ENCODE measurements at regions of chr6 and their contacts with region 1.

Region 1: GRCh38 chr6:125888989-125889656 is 67.4 kb upstream of the HINT3 start:
- DNase-seq: no peak

Region 2: GRCh38 chr6:126504792-126505191 is 615.7 kb after region 1 on chr6:
- intact Hi-C with region 1: loop called in 1 of 2 experiments (anchors 5 kb)
- DNase-seq: no peak

Region 3: GRCh38 chr6:127352524-127352923 is 1463.4 kb after region 1 on chr6:
- intact Hi-C with region 1: loop called in 1 of 2 experiments (anchors 5 kb)
- DNase-seq: no peak

Measured in posterior vena cava (tissue), 2 donors.